A673 (cell line): ENCODE measurements at regions of chr4 and their contacts with region 1.

Region 1: DNA sequence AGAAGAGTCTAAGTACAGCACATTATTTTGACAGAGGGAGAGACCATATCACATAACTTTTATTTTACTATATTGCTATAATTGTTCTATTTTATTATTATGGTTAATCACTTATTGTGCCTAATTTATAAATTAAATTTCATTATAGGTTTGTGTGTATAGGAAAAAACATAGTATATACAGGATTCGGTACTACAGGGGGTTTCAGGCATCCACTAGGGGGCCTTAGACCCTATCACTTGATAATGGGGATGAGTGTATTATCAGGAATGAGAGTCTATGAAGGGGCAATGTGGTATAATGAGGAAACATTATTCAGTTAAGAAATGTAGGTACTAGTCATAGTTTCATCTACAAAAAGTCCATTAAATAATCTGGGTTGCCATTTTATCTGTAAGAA is 833.1 kb downstream of the C4orf33 start:
- DNase-seq: peak; percentile 64
- H3K4me3 ChIP-seq: no peak overlapping the region
- H3K27ac ChIP-seq: no peak overlapping the region
- H3K4me1 ChIP-seq: peaks cover 7% of the 10 kb centered on the region
- H3K27me3 ChIP-seq: no peaks in the 10 kb centered on the region
- CTCF ChIP-seq: peak; percentile 80

Region 2: DNA sequence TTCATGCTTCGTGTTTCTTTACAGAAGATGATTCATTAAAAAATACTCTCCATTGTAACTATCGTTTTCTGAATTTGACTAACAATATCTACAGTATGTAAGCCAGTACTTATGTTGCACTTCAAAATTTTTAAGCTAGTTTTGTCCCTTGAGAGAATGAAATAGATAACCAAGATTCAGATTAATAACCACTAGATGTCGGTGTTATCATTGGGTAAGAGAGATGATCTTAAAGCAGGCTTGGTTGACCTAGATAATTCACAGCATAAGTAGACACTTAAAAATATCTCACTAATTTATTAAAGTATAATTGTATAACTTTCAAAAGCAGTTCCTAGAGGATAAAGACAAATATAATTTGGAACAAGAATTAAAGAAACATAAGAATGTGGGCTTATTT is 402.2 kb before region 1 on chr4:
- CTCF ChIA-PET with region 1: no interaction called
- POLR2A ChIA-PET with region 1: no interaction called
- intact Hi-C with region 1: loop called (anchors 10 kb)
- DNase-seq: peak; percentile 40
- H3K4me3 ChIP-seq: no peak overlapping the region
- H3K27ac ChIP-seq: no peak overlapping the region
- H3K4me1 ChIP-seq: no peaks in the 10 kb centered on the region
- H3K27me3 ChIP-seq: no peaks in the 10 kb centered on the region
- CTCF ChIP-seq: peak; percentile 55

Region 3: DNA sequence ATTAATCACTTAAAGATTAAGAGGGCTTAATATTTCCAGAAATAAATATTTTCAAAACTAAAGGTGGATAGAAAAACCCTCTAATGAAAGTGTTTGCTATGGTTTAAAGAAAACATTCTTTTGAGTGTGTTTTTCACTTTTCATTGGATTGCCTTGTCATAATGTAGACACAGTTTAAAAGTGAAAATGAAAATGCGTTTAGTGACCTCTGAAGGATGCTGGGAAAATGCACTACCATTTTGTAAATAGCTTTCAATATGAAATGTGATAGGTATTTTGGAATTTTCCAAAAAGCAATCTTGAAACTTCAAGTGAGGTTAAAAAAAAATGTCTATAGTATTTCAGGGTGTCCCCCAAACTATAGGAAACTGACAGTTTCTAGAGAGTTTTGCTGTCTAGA is 190.9 kb before region 1 on chr4:
- CTCF ChIA-PET with region 1: no interaction called
- POLR2A ChIA-PET with region 1: no interaction called
- intact Hi-C with region 1: no loop called
- DNase-seq: no peak
- H3K4me3 ChIP-seq: no peak overlapping the region
- H3K27ac ChIP-seq: no peak overlapping the region
- H3K4me1 ChIP-seq: no peaks in the 10 kb centered on the region
- H3K27me3 ChIP-seq: no peaks in the 10 kb centered on the region
- CTCF ChIP-seq: no peak

Region 4: DNA sequence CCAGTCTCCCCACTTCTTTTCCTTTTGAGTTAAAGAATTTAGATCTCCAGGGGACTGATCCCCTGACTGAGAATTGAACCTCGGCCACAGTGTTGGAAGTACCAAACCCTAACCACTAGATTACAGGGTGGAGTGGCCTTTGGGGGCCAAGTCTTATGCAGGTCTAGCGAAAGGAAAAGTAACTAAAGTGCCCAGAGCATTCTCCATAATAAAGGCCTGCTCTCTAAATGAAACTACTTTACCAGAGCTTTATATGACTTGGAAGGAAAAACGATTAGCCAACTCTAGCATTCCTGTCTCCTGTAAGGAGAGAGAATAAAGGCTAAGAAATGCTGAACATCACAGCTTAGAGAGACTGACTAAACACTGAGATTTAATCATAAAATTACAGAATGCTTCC is 45.1 kb before region 1 on chr4:
- CTCF ChIA-PET with region 1: no interaction called
- POLR2A ChIA-PET with region 1: no interaction called
- intact Hi-C with region 1: no loop called
- DNase-seq: no peak
- H3K4me3 ChIP-seq: no peak overlapping the region
- H3K27ac ChIP-seq: no peak overlapping the region
- H3K4me1 ChIP-seq: no peaks in the 10 kb centered on the region
- H3K27me3 ChIP-seq: no peaks in the 10 kb centered on the region
- CTCF ChIP-seq: no peak

Region 5: DNA sequence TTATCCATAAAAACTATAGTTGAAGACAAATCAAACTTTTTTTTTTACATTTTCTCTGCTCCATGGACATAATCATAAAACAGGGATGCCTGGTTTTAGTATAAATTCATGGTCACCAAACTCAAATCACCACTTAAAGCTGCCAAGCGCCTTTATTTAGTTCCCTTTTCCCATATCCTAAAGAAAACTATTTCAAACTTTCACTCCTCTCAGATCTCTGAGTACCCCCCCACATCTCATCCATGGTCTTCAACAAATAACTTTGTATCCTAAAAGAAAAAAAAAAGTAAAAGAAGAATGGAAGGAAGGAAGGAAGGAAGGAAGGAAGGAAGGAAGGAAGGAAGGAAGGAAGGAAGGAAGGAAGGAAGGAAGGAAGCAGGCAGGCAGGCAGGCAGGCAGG is 605.6 kb after region 1 on chr4:
- CTCF ChIA-PET with region 1: no interaction called
- POLR2A ChIA-PET with region 1: no interaction called
- intact Hi-C with region 1: loop called (anchors 10 kb)
- DNase-seq: peak; percentile 95
- H3K4me3 ChIP-seq: no peak overlapping the region
- H3K27ac ChIP-seq: peak overlapping the region; percentile 96
- H3K4me1 ChIP-seq: peaks cover 34% of the 10 kb centered on the region
- H3K27me3 ChIP-seq: no peaks in the 10 kb centered on the region
- CTCF ChIP-seq: no peak

Region 6: DNA sequence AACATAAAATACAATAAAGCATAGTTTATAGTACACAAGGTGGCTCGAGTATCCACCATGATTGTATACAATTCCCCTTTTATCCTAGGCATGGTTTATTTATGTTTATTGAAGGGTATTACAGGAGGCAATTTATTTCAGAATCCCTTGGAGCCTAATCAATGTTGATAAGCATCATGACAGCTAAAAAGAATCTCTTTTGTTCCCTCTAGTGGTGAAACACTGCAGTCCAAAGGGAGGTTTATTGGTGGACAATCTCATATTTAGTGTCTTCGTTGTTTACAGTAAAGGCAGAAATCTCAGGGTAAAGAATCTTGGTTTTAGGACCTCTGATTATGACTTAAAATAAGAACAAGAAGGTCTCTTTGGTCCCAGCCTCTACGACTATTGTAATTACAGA is 879.4 kb after region 1 on chr4:
- CTCF ChIA-PET with region 1: no interaction called
- POLR2A ChIA-PET with region 1: no interaction called
- intact Hi-C with region 1: loop called (anchors 5 kb)
- DNase-seq: peak; percentile 70
- H3K4me3 ChIP-seq: no peak overlapping the region
- H3K27ac ChIP-seq: no peak overlapping the region
- H3K4me1 ChIP-seq: peaks cover 24% of the 10 kb centered on the region
- H3K27me3 ChIP-seq: no peaks in the 10 kb centered on the region
- CTCF ChIP-seq: peak; percentile 79